ENCODE measurements at regions of chr13 and their contacts with region 1.

Region 1: DNA sequence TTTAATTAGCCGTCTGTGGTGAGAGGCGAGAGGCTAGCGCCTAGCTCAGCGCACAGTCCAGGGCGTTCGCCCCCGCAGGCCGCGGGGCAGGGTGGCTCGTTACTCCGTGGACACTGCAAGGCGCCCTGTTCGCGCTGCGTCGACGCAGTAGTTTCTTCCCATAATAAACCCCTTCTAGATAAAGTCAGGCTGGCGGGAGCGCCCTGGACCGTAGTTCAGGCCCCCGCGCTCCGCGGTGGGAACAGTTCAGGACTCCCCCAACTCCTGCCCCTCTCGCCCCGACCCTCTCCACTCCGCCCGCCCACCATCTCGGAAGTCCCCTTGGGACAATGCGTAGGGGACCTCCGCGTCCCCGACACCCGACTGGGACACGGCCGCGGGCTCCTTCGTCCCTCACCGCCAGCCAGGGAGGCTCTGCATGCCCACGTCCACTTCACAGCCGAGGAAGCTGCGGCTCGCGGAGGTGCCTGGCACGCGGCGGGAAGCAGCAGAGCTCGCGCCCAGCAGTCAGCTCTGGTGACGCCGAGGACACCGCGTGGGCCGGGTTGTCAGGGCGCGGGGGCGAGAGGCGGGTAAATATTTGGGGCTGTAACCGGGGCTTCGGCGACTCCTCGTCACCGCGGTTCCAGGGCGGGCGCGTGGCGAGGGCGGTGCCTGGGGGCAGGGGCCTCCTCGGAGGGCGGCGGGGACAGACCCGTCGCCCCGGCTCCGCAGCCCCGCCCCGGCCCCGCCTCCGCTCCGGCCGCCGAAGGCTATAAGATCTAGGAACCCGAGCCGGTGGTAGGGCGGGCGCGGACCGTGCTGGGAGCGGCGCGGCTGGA is at the start of gene RGCC:
- DNase-seq: peak; percentile 70 to 94
- H3K4me3 ChIP-seq: peak within 1 kb of the TSS; percentile 80 to 99
- H3K27ac ChIP-seq: peak within 1 kb of the TSS; percentile 61 to 78
- H3K4me1 ChIP-seq: peaks cover 0 to 18% of the 10 kb centered on the region in 2 donors
- H3K27me3 ChIP-seq: no peaks in the 10 kb centered on the region
- CTCF ChIP-seq: no peak
- total RNA-seq, gene RGCC: 184 TPM

Region 2: GRCh38 chr13:41496420-41497234 is 39.6 kb after region 1 on chr13:
- intact Hi-C with region 1: loop called (anchors 2 kb)
- DNase-seq: no peak
- H3K4me3 ChIP-seq: no peak overlapping the region
- H3K27ac ChIP-seq: peak overlapping the region; percentile 71 to 75
- H3K4me1 ChIP-seq: peaks cover 0 to 41% of the 10 kb centered on the region in 2 donors
- H3K27me3 ChIP-seq: no peaks in the 10 kb centered on the region
- CTCF ChIP-seq: no peak